Naive thymus-derived CD4-positive, alpha-beta T cell (primary cell): ENCODE measurements at regions of chr19 and their contacts with region 1.

Region 1: DNA sequence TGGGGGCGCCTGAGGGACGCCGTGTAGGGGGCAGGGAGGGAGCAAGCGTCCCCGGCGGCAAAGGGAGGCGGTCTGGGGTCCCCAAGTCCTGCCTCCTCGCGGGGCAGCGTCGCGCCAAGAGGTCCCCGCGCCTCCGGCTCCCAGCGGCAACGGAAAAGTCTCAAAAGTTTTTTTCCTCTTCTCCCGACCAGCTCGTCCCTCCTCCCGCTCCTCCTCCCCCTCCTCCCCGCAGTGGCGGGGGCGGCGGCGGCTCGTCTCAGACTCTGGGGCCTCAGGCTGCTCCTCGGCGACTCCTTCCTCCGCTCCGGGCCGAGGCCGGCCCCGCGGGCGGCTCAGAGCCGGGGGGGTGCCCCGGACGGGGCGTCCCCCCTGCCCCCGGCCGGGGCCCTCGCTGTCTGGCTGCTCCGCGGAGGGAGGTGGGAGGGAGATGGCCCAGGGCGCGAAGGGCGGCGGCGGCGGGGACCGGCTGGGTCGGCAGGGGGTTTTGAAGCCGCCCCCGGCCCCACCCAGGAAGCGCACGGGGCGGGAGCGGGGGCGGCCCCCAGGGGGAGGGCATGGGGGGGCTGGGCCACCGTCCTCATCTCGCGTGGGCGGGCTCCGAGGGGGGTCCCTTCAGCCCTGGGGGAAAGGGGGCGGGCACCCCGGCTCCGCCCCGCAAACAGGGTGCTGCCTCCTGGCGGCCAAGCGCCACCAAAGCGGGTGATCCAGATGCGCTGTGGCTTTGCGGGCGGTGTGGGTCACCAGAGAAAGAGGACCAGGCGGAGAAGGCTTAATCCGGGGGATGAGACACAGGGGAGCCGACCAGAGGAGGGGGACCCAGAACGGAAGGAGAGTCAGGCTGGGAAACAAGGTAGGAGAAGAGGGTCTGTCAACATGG is at the start of gene TGFB1:
- DNase-seq: peak; percentile 89 to 94 (median 92)
- ATAC-seq: peak; percentile 85
- H3K4me3 ChIP-seq: peak within 1 kb of the TSS; percentile 94
- H3K4me3 Mint-ChIP-seq: peak within 1 kb of the TSS; percentile 92 to 100 (median 98)
- H3K27ac ChIP-seq: peak within 1 kb of the TSS; percentile 96
- H3K27ac Mint-ChIP-seq: peak within 1 kb of the TSS; percentile 94 to 100 (median 98)
- H3K4me1 ChIP-seq: peaks cover 44 to 70% of the 10 kb centered on the region in 2 donors
- H3K4me1 Mint-ChIP-seq: peaks cover 56 to 71% (median 59%) of the 10 kb centered on the region in 7 donors
- H3K27me3 ChIP-seq: no peaks in the 10 kb centered on the region
- H3K27me3 Mint-ChIP-seq: no peaks in the 10 kb centered on the region
- total RNA-seq, gene TGFB1: 91.2 to 322 (median 185) TPM

Region 2: DNA sequence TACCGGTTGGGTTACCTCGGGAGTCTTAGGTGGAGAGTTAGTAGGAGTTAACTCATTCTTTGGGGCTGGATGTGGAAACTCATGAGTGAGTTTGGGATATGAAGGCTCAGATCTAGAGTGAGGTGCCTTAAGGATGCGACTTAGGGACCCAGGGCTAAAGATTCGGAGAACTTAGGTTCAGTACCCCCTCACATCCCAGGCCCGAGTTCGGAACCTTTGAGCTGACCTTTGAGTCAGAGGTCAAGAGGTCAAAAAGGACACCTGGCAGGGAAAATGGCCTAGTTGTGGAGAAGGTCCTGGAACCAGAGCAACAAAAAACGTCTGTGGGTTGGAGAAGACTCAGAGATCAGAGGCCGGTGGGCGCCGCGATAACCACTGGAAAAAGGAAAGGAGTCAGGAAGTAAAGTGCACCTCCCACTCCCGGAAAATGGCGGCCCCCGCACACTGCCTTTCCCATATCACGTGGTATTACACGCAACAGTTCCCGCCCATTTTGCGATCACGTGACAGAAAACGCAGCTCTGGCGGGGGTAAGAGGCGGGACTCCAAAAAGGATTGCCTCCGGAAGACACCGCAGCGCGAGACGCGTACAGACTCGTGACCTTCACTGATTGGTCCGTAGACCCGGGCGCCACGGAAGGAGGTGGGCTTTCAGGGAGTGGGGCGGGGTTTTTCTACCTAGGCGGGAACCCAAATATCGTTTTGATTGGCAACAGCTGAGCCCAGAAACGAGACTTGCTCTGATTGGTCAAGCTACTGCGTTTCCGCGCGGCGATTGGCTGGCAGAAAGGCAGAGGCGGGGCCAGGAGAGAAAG is 603.4 kb before region 1 on chr19 and contains the start of gene ACTMAP:
- CTCF ChIA-PET with region 1: no interaction called
- POLR2A ChIA-PET with region 1: no interaction called
- intact Hi-C with region 1: loop called in 1 of 2 experiments (anchors 1 kb)
- DNase-seq: peak; percentile 95 to 100 (median 100)
- ATAC-seq: peak; percentile 93
- H3K4me3 ChIP-seq: peak within 1 kb of the TSS; percentile 96
- H3K4me3 Mint-ChIP-seq: peak within 1 kb of the TSS; percentile 93 to 100 (median 96)
- H3K27ac ChIP-seq: peak within 1 kb of the TSS; percentile 84
- H3K27ac Mint-ChIP-seq: peak within 1 kb of the TSS; percentile 90 to 99 (median 98)
- H3K4me1 ChIP-seq: peaks cover 11 to 27% of the 10 kb centered on the region in 2 donors
- H3K4me1 Mint-ChIP-seq: peaks cover 31 to 43% (median 42%) of the 10 kb centered on the region in 7 donors
- H3K27me3 ChIP-seq: no peaks in the 10 kb centered on the region
- H3K27me3 Mint-ChIP-seq: no peaks in the 10 kb centered on the region
- total RNA-seq, gene ACTMAP: 5.5 to 13.7 (median 7.8) TPM

Region 3: GRCh38 chr19:41206926-41207750 is 146.6 kb before region 1 on chr19:
- CTCF ChIA-PET with region 1: interaction called, 3 read pairs
- POLR2A ChIA-PET with region 1: interaction called, 7 read pairs
- intact Hi-C with region 1: loop called (anchors 1 to 2 kb)
- DNase-seq: no peak
- ATAC-seq: no peak
- H3K4me3 ChIP-seq: no peak overlapping the region
- H3K4me3 Mint-ChIP-seq: no peak overlapping the region
- H3K27ac ChIP-seq: no peak overlapping the region
- H3K27ac Mint-ChIP-seq: peak overlapping the region in 6 of 9 donors; percentile 15 to 85 (median 54)
- H3K4me1 ChIP-seq: no peaks in the 10 kb centered on the region
- H3K4me1 Mint-ChIP-seq: peaks cover 3 to 12% (median 7%) of the 10 kb centered on the region in 7 donors
- H3K27me3 ChIP-seq: no peaks in the 10 kb centered on the region
- H3K27me3 Mint-ChIP-seq: no peaks in the 10 kb centered on the region

Region 4: GRCh38 chr19:41288673-41289505 is 64.8 kb before region 1 on chr19:
- CTCF ChIA-PET with region 1: no interaction called
- POLR2A ChIA-PET with region 1: no interaction called
- intact Hi-C with region 1: no loop called
- DNase-seq: no peak
- ATAC-seq: no peak
- H3K4me3 ChIP-seq: no peak overlapping the region
- H3K4me3 Mint-ChIP-seq: no peak overlapping the region
- H3K27ac ChIP-seq: no peak overlapping the region
- H3K27ac Mint-ChIP-seq: peak overlapping the region in 6 of 9 donors; percentile 8 to 61 (median 48)
- H3K4me1 ChIP-seq: peaks cover 0 to 5% of the 10 kb centered on the region in 2 donors
- H3K4me1 Mint-ChIP-seq: peaks cover 0 to 23% (median 10%) of the 10 kb centered on the region in 7 donors
- H3K27me3 ChIP-seq: no peaks in the 10 kb centered on the region
- H3K27me3 Mint-ChIP-seq: no peaks in the 10 kb centered on the region

Region 5: GRCh38 chr19:41341669-41342490 is 11.8 kb before region 1 on chr19:
- CTCF ChIA-PET with region 1: interaction called, 9 read pairs
- POLR2A ChIA-PET with region 1: interaction called, 9 read pairs
- intact Hi-C with region 1: loop called in 1 of 2 experiments (anchors 1 kb)
- DNase-seq: no peak
- ATAC-seq: peak; percentile 60
- H3K4me3 ChIP-seq: no peak overlapping the region
- H3K4me3 Mint-ChIP-seq: peak overlapping the region in 9 of 10 donors; percentile 32 to 72 (median 63)
- H3K27ac ChIP-seq: no peak overlapping the region
- H3K27ac Mint-ChIP-seq: peak overlapping the region in 8 of 9 donors; percentile 24 to 84 (median 70)
- H3K4me1 ChIP-seq: peaks cover 27 to 35% of the 10 kb centered on the region in 2 donors
- H3K4me1 Mint-ChIP-seq: peaks cover 12 to 61% (median 42%) of the 10 kb centered on the region in 7 donors
- H3K27me3 ChIP-seq: no peaks in the 10 kb centered on the region
- H3K27me3 Mint-ChIP-seq: no peaks in the 10 kb centered on the region

Region 6: GRCh38 chr19:41439441-41440222 is 85.9 kb after region 1 on chr19 and contains the start of gene DMAC2:
- CTCF ChIA-PET with region 1: interaction called, 4 read pairs
- POLR2A ChIA-PET with region 1: interaction called, 5 read pairs
- intact Hi-C with region 1: loop called in 1 of 2 experiments (anchors 1 kb)
- DNase-seq: peak; percentile 65 to 94 (median 88)
- ATAC-seq: peak; percentile 100
- H3K4me3 ChIP-seq: peak within 1 kb of the TSS; percentile 96
- H3K4me3 Mint-ChIP-seq: peak within 1 kb of the TSS in 2 of 10 donors; percentile 49 to 54
- H3K27ac ChIP-seq: peak within 1 kb of the TSS; percentile 85
- H3K27ac Mint-ChIP-seq: peak within 1 kb of the TSS in 5 of 9 donors; percentile 3 to 89 (median 56)
- H3K4me1 ChIP-seq: peaks cover 7 to 12% of the 10 kb centered on the region in 2 donors
- H3K4me1 Mint-ChIP-seq: peaks cover 4 to 25% (median 6%) of the 10 kb centered on the region in 7 donors
- H3K27me3 ChIP-seq: no peaks in the 10 kb centered on the region
- H3K27me3 Mint-ChIP-seq: peaks cover 0 to 2% (median 0%) of the 10 kb centered on the region in 5 donors
- total RNA-seq, gene DMAC2: 22.2 to 44.4 (median 26.2) TPM

Region 7: GRCh38 chr19:41554907-41555306 is 201.2 kb after region 1 on chr19:
- CTCF ChIA-PET with region 1: interaction called, 3 read pairs
- POLR2A ChIA-PET with region 1: interaction called, 4 read pairs
- intact Hi-C with region 1: loop called in 1 of 2 experiments (anchors 5 kb)
- DNase-seq: peak in 7 of 9 donors; percentile 62 to 78 (median 73)
- ATAC-seq: peak; percentile 88
- H3K4me3 ChIP-seq: peak overlapping the region; percentile 77
- H3K4me3 Mint-ChIP-seq: peak overlapping the region; percentile 39 to 100 (median 97)
- H3K27ac ChIP-seq: peak overlapping the region; percentile 88
- H3K27ac Mint-ChIP-seq: peak overlapping the region; percentile 25 to 97 (median 95)
- H3K4me1 ChIP-seq: peaks cover 50 to 65% of the 10 kb centered on the region in 2 donors
- H3K4me1 Mint-ChIP-seq: peaks cover 43 to 76% (median 69%) of the 10 kb centered on the region in 7 donors
- H3K27me3 ChIP-seq: no peaks in the 10 kb centered on the region
- H3K27me3 Mint-ChIP-seq: no peaks in the 10 kb centered on the region

Region 8: GRCh38 chr19:42295831-42296525 is 942.3 kb after region 1 on chr19:
- CTCF ChIA-PET with region 1: no interaction called
- POLR2A ChIA-PET with region 1: no interaction called
- intact Hi-C with region 1: no loop called
- DNase-seq: peak; percentile 76 to 94 (median 85)
- ATAC-seq: peak; percentile 96
- H3K4me3 ChIP-seq: no peak overlapping the region
- H3K4me3 Mint-ChIP-seq: no peak overlapping the region
- H3K27ac ChIP-seq: no peak overlapping the region
- H3K27ac Mint-ChIP-seq: peak overlapping the region in 6 of 9 donors; percentile 11 to 70 (median 42)
- H3K4me1 ChIP-seq: peaks cover 0 to 8% of the 10 kb centered on the region in 2 donors
- H3K4me1 Mint-ChIP-seq: peaks cover 8 to 18% (median 12%) of the 10 kb centered on the region in 7 donors
- H3K27me3 ChIP-seq: no peaks in the 10 kb centered on the region
- H3K27me3 Mint-ChIP-seq: no peaks in the 10 kb centered on the region